Posterior vena cava (tissue), 2 donors: ENCODE measurements at regions of chr12 and their contacts with region 1.

Region 1: DNA sequence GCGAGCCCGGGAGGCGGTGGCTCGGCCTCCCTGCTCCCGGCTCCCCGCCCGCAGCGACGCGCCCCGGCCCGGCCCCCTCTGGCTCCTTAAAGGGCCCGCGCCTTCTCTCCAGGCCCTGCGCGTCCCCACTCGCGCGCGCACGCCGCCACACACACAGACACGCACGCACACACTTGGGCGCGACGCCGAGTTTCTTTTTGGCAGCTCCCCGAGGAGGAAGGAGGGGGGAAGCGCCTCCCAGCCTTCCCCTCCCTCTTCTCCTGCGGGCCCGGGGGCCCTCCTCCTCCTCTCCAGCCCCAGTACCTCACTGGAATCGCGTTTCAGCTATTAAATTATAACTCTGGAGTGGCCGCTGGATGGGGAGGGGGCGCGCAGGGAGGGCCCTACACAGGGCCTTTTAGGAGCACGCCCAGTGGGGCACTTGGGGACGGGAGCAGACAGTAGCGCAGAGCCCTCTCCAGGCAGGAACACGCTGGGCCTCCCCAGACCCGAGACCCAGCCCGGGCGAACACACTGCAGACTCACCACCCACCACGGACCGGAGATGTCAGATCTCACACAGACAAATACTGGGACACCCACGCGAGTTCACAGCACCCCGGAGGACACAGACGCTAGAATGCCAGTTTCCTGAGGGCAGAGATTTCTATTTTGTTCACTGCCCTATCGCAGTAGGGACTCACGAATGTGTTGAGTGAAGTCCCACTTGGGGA is 405 bp upstream of the NCOR2 start:
- DNase-seq: peak; percentile 98

Region 2: GRCh38 chr12:124379938-124380754 is 187.7 kb before region 1 on chr12:
- intact Hi-C with region 1: loop called in 1 of 2 experiments (anchors 5 kb)
- DNase-seq: peak; percentile 94

Region 3: GRCh38 chr12:124422570-124423523 is 145.0 kb before region 1 on chr12:
- intact Hi-C with region 1: no loop called
- DNase-seq: peak; percentile 98

Region 4: GRCh38 chr12:124530637-124531263 is 37.1 kb before region 1 on chr12:
- intact Hi-C with region 1: loop called in 1 of 2 experiments (anchors 1 kb)
- DNase-seq: no peak

Region 5: DNA sequence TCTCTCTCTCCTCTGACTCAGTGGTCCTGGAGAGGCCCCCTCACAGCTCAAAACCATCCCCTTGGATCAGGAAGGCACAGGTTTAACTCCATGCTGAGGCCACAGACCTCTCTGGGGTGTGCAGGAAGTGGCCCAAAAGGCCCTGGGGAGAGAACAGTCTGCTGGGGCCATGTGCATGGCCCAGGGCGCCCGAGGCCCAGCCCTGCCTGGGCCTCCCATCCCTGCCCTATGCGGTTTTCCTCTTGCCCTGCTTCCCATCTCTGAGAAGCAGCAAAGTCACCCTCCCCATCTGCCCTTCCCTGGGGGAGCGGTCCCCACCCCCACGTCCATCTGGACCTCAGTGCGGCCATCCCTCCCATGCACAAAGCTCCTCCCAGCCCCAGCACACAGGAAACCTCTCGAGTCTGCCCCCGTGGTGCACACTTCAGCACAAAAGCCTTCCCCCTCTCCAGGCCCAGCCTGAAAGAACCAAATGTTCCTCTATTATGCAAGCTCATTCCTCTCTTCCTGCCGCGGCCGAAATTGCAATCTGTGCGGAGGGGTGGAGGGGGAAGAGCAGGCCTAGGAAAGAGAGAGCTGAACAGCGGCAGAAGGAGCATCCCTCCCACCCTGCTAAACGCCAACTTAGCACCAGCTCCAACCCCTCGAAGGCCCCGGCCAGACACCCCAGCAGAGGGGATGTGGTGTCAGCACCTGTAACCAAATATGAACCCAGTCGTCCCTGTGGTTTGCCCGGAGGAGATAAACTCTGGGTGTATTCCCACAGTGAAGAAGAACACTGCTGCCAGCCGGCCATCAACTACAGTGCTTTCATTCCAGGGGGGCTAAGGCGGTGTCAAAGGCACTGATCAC is 187.4 kb after region 1 on chr12:
- intact Hi-C with region 1: loop called in 1 of 2 experiments (anchors 10 kb)
- DNase-seq: peak; percentile 94